Tibial artery (tissue), 4 donors: ENCODE measurements at regions of chr11 and their contacts with region 1.

Region 1: GRCh38 chr11:69985641-69986439 is 92.3 kb upstream of the ANO1 start:
- DNase-seq: no peak
- H3K4me3 ChIP-seq: peak overlapping the region; percentile 59 to 61
- H3K27ac ChIP-seq: peak overlapping the region; percentile 82 to 87
- H3K4me1 ChIP-seq: peaks cover 0 to 74% (median 43%) of the 10 kb centered on the region in 4 donors
- H3K27me3 ChIP-seq: no peaks in the 10 kb centered on the region
- CTCF ChIP-seq: no peak

Region 2: DNA sequence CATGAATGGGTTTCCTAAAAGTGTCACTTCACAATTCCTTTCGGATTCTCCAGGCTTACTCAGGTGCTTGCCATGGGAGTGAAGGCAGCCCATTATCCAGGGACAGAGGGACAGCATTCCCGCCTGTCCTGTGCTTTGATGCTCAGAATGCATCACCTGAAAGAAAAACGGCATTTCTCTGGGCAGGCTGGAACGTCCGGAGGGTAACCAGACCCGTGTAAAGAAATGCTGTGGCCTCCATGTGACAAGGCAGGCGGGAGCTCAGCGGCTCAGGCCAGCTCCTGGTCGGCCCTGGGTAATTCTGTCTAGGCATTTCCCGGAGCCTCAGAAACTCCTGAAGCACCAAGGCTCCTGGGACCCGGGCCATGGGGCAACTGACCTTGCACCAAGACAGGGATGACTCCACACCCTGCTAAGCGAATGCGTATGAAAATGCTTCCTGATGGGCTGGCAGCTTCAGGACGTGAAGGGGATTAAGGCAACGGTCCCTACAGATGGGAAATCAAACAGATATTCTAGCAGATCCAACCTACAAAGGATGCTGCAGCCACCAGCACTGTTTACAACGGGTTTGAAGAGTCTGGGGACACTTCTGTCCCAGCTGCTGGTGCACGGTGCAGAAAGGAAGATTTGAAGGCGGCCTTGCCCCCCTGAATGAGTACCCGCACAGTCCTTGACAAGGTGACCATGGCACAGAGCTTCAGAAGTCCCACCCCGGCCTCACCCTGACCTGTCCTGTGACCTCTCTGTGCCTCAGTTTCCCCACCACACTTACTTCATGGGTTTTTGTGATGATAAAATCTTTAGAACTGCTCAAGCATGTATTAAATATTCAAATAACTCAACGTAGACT is 153.1 kb before region 1 on chr11:
- intact Hi-C with region 1: no loop called
- DNase-seq: peak in 1 of 2 donors; percentile 28
- H3K4me3 ChIP-seq: no peak overlapping the region
- H3K27ac ChIP-seq: no peak overlapping the region
- H3K4me1 ChIP-seq: no peaks in the 10 kb centered on the region
- H3K27me3 ChIP-seq: peaks cover 0 to 59% of the 10 kb centered on the region in 2 donors
- CTCF ChIP-seq: no peak

Region 3: GRCh38 chr11:69939551-69940245 is 46.1 kb before region 1 on chr11:
- intact Hi-C with region 1: loop called (anchors 10 kb)
- DNase-seq: peak; percentile 63 to 89
- H3K4me3 ChIP-seq: peak overlapping the region; percentile 22 to 40
- H3K27ac ChIP-seq: peak overlapping the region; percentile 87 to 91
- H3K4me1 ChIP-seq: peaks cover 0 to 29% (median 15%) of the 10 kb centered on the region in 4 donors
- H3K27me3 ChIP-seq: no peaks in the 10 kb centered on the region
- CTCF ChIP-seq: no peak

Region 4: GRCh38 chr11:70402698-70403097 is 416.9 kb after region 1 on chr11:
- intact Hi-C with region 1: no loop called
- DNase-seq: no peak
- H3K4me3 ChIP-seq: no peak overlapping the region
- H3K27ac ChIP-seq: no peak overlapping the region
- H3K4me1 ChIP-seq: peaks cover 0 to 34% (median 18%) of the 10 kb centered on the region in 4 donors
- H3K27me3 ChIP-seq: no peaks in the 10 kb centered on the region
- CTCF ChIP-seq: no peak